Astrocyte of the cerebellum (primary cell): ENCODE measurements at regions of chr22 and their contacts with region 1.

Region 1: GRCh38 chr22:40147388-40148176 is 30.1 kb upstream of the TNRC6B start:
- DNase-seq: no peak
- H3K4me3 ChIP-seq: no peak overlapping the region
- CTCF ChIP-seq: no peak

Region 2: DNA sequence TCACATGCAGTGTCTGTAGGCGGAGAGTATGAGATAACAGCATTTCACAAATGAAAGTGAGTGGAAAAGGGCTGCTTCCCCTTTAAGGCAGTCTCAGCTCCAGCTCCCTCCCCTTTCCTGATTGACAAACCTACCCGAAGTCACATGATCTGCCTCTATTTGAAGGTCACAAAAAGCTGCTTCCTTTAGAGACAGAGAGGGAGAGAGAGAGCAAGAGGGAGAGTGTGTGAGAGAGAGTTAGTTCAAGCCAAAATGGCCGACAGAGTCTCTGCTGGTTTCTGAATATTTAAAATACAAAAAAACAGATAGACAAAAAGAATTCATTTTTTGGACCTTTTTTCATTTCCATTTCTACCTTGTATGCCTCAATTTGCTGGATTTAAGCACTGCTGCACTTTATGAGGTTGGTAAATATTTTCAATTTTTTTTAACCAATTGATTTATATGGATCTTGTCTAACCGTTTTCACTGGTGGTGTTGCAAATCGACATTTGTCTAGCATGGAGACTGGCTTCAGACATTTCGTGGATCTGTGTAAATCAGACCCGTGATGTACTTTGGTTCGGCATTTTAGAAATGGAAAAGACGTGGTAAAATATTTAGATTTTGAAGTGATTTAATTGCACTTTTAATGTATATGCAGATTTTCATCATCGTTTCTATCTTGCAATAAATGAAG is 30.3 kb after region 1 on chr22 and contains the start of gene TNRC6B:
- in situ Hi-C with region 1: loop called (anchors 5 kb)
- DNase-seq: peak; percentile 94
- H3K4me3 ChIP-seq: peak within 1 kb of the TSS; percentile 76
- CTCF ChIP-seq: no peak

Region 3: DNA sequence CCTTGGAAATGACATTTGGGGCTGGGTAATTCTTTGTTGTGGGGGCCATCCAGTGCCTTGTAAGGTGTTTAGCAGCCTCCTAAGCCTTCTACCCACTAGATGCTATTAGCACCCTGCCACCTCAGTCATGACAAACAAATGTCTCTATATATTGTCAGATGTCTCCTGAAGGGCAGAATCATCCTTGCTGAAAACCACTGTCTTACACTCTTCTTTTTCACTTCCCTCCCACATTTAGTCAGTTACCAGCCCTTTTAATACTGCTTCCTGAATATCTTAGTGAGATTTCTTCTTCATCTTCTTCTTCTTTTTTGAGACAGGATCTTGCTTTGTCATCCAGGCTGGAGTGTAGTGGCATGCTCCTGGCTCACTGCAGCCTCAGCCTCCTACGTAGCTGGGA is 63.2 kb after region 1 on chr22:
- in situ Hi-C with region 1: no loop called
- DNase-seq: no peak
- H3K4me3 ChIP-seq: no peak overlapping the region
- CTCF ChIP-seq: no peak